Posterior cingulate gyrus (tissue), 11 donors: ENCODE measurements at regions of chr6 and their contacts with region 1.

Region 1: GRCh38 chr6:7615611-7616383 is 25.8 kb downstream of the SNRNP48 start:
- DNase-seq: peak in 2 of 10 donors; percentile 21 to 22

Region 2: GRCh38 chr6:7270320-7271204 is 345.2 kb before region 1 on chr6:
- intact Hi-C with region 1: loop called (anchors 2 kb)
- DNase-seq: peak in 1 of 10 donors; percentile 70

Region 3: GRCh38 chr6:7424967-7425807 is 190.6 kb before region 1 on chr6:
- intact Hi-C with region 1: loop called (anchors 10 kb)
- DNase-seq: no peak